ENCODE measurements at regions of chr2 and their contacts with region 1.

Region 1: GRCh38 chr2:121736462-121737341 is at the start of gene NIFK:
- DNase-seq: peak; percentile 99 to 100 (median 100)
- ATAC-seq: peak; percentile 86
- H3K4me3 ChIP-seq: peak within 1 kb of the TSS; percentile 67
- H3K4me3 Mint-ChIP-seq: peak within 1 kb of the TSS; percentile 97
- H3K27ac ChIP-seq: peak within 1 kb of the TSS; percentile 78 to 89
- H3K27ac Mint-ChIP-seq: peak within 1 kb of the TSS; percentile 99
- H3K4me1 ChIP-seq: peaks cover 28% of the 10 kb centered on the region
- H3K4me1 Mint-ChIP-seq: peaks cover 47% of the 10 kb centered on the region
- H3K27me3 ChIP-seq: no peaks in the 10 kb centered on the region
- H3K27me3 Mint-ChIP-seq: no peaks in the 10 kb centered on the region
- CTCF ChIP-seq: no peak
- total RNA-seq, gene NIFK: 43.6 to 47.7 TPM

Region 2: DNA sequence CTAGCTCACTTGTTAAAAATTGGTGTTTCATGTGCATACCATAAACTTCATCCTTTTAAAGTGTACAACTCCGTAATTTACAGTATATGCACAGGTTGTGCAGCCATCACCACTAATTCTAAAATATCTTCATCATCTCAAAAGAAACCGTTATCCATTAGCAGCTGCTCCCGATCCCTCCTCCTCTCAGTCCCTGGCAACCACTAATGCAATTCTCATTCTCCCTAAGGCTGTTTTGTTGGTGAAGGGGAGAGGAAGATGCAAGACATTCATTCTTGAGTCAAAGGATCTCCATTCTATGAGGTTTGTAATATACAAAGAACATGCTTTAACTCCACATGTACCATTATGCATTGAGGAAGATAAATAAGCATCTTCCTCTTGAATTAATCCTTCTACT is 157.4 kb before region 1 on chr2:
- CTCF ChIA-PET with region 1: no interaction called
- POLR2A ChIA-PET with region 1: no interaction called
- intact Hi-C with region 1: no loop called
- DNase-seq: no peak
- ATAC-seq: no peak
- H3K4me3 ChIP-seq: no peak overlapping the region
- H3K4me3 Mint-ChIP-seq: no peak overlapping the region
- H3K27ac ChIP-seq: no peak overlapping the region
- H3K27ac Mint-ChIP-seq: no peak overlapping the region
- H3K4me1 ChIP-seq: peaks cover 2% of the 10 kb centered on the region
- H3K4me1 Mint-ChIP-seq: peaks cover 43% of the 10 kb centered on the region
- H3K27me3 ChIP-seq: no peaks in the 10 kb centered on the region
- H3K27me3 Mint-ChIP-seq: no peaks in the 10 kb centered on the region
- CTCF ChIP-seq: no peak

Region 3: GRCh38 chr2:121699421-121700333 is 37.0 kb before region 1 on chr2:
- CTCF ChIA-PET with region 1: interaction called, 4 read pairs
- POLR2A ChIA-PET with region 1: interaction called, 10 read pairs
- intact Hi-C with region 1: no loop called
- DNase-seq: peak; percentile 63 to 94 (median 75)
- ATAC-seq: peak; percentile 94
- H3K4me3 ChIP-seq: peak overlapping the region; percentile 39
- H3K4me3 Mint-ChIP-seq: peak overlapping the region; percentile 75
- H3K27ac ChIP-seq: peak overlapping the region; percentile 58 to 74
- H3K27ac Mint-ChIP-seq: peak overlapping the region; percentile 88
- H3K4me1 ChIP-seq: peaks cover 28% of the 10 kb centered on the region
- H3K4me1 Mint-ChIP-seq: peaks cover 38% of the 10 kb centered on the region
- H3K27me3 ChIP-seq: no peaks in the 10 kb centered on the region
- H3K27me3 Mint-ChIP-seq: no peaks in the 10 kb centered on the region
- CTCF ChIP-seq: no peak

Region 4: DNA sequence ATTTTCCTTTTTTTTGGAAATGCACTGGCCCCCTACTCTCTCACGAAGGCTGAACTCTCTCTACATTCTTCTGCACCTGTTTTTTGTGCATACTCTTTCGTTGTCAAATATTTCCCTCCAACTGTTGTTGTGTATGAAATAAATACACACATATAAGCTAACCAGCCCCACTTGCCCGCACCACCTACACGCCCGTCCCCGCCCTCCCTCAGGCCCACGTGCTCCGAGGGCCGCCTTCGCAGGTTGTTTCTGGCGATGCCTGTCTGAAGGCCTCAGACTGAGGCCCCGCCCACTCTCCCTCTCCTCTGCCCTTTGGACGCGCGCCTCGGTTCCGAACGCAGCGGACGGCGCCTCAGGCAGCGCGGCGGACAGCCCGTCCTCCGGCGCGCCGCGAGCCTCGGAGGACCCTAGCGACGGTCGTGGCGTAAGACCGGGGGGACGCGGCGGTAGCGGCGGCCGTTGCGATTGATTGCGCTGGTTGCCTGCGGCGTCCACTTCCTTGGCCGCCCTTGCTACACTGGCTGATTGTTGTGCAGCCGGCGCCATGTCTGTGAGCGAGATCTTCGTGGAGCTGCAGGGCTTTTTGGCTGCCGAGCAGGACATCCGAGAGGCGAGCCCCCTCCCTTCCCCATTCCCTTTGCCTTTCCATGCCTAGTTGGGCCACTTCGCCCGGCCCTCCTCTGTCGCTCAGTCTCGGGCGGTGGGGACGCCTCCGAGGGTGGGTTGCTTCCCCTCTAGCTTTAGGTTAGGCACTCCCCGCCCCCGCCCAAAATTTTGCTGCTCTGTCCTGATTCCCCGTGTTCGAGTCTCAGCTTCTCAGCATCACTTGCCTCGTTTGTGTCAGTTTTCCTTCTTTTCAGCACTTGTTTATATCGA is 18.8 kb after region 1 on chr2 and contains the start of gene TSN:
- CTCF ChIA-PET with region 1: no interaction called
- POLR2A ChIA-PET with region 1: interaction called, 28 read pairs
- intact Hi-C with region 1: loop called (anchors 1 kb)
- DNase-seq: peak; percentile 94 to 99 (median 97)
- ATAC-seq: peak; percentile 99
- H3K4me3 ChIP-seq: peak within 1 kb of the TSS; percentile 94
- H3K4me3 Mint-ChIP-seq: peak within 1 kb of the TSS; percentile 91
- H3K27ac ChIP-seq: peak within 1 kb of the TSS; percentile 66 to 72
- H3K27ac Mint-ChIP-seq: peak within 1 kb of the TSS; percentile 91
- H3K4me1 ChIP-seq: peaks cover 13% of the 10 kb centered on the region
- H3K4me1 Mint-ChIP-seq: peaks cover 33% of the 10 kb centered on the region
- H3K27me3 ChIP-seq: no peaks in the 10 kb centered on the region
- H3K27me3 Mint-ChIP-seq: no peaks in the 10 kb centered on the region
- CTCF ChIP-seq: no peak
- total RNA-seq, gene TSN: 49.1 to 50.9 TPM

Region 5: DNA sequence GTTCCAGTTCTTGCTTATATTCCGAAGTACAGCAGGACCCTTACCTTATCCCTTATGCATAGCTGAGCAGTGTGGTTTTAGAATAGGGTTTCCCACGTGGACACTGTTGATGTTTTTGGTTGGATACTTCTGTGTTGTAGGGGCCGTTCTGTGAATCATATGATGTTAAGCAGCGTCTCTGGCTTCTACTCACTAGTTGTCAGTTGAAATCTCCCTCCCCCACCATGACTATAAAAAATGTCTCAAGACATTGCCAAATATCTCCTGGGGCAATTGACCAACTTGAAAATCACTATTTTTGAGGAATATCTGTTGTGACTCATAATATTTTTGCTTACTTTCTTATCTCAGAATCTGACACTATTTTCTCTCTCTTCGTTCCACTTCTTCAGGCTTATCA is 732.4 kb after region 1 on chr2:
- CTCF ChIA-PET with region 1: no interaction called
- POLR2A ChIA-PET with region 1: no interaction called
- intact Hi-C with region 1: no loop called
- DNase-seq: no peak
- ATAC-seq: no peak
- H3K4me3 ChIP-seq: no peak overlapping the region
- H3K4me3 Mint-ChIP-seq: no peak overlapping the region
- H3K27ac ChIP-seq: no peak overlapping the region
- H3K27ac Mint-ChIP-seq: no peak overlapping the region
- H3K4me1 ChIP-seq: no peaks in the 10 kb centered on the region
- H3K4me1 Mint-ChIP-seq: no peaks in the 10 kb centered on the region
- H3K27me3 ChIP-seq: no peaks in the 10 kb centered on the region
- H3K27me3 Mint-ChIP-seq: no peaks in the 10 kb centered on the region
- CTCF ChIP-seq: no peak

Measured in CD4-positive, alpha-beta T cell (primary cell).